ENCODE measurements at regions of chr2 and their contacts with region 1.

Region 1: DNA sequence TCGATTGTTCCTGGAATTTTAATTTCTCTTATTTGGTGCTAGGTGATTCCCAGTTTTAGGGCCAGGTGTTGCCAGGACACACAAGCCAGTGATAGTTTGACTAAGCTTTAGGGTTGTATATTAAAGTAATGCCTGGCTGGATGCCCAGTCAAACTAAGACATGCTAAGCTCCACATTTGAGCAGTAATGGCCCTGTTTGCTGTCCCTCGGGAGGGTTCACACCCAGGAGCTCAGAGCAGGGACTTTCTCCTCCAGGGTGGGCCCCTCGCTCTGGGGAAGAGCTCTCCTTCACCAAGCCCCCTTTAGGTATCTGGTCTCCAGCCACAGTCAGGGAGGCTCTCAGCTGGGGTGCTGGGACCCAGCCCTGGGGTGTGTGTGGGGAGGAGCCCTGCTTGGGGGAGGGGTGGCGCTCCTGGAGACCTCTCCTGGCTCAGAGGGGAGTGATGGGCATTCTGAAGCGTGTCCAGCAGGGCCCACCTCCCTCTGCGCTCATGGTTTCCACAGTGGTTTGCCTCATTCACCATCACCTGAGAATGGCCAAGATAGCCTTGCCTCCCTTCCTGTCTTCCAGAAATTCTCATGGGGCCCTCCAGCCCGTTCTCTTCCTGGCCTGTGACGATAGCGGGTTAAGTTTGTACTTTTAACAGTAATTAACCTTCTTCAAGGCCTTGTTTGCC is 31.7 kb downstream of the INPP4A start:
- DNase-seq: peak; percentile 52
- H3K4me3 ChIP-seq: no peak overlapping the region
- H3K27ac ChIP-seq: peak overlapping the region in 1 of 4 donors; percentile 51
- H3K4me1 ChIP-seq: peaks cover 46 to 84% (median 59%) of the 10 kb centered on the region in 4 donors
- H3K27me3 ChIP-seq: no peaks in the 10 kb centered on the region
- CTCF ChIP-seq: no peak
- EP300 ChIP-seq: no peak
- POLR2A ChIP-seq: no peak

Region 2: DNA sequence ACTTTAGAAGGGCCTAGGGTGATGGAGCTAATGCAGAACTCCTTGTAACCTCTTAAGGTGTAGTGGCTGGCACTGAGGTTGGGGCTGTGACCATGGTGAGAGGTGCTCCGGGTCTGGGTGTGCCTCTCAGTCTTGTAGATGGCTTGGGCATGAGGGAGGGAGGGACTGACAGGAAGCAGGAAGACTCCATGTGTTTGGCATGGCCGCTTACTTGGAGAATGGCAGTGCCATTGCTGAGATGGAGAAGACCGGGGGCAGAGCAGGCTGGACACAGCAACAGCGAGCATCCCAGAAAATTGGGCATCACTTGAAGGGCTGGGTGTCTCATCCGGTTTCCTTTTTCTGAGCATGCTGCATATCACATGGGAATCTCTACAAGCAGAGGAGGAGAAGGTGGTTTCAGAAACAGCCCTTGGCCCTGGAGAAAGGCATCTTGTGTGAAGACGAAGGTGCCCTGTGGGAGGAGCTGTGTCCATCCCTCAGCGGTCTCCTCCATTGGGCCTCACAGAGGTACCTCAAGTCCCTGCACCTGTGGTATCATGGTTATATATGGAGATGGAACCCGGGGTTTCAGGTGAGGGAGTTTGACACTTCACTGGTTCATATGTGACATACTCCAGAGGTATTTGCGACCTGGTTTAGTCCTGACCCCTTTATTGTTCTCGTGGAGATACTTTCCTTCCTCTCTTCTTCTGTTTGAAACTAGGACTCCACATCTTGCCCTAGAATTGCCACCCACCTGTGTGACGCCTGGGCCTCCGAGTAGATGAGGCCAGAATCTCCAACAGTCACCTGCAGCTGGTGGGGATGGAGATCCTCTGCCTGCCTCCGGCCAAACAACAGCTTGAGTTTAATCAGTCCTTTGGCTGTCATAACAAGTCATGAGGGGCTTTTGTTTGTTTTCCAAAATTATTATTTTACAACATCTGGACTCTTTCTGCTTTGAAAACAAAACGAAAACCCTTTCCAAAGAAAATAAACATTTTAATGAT is 13.9 kb after region 1 on chr2:
- in situ Hi-C with region 1: no loop called
- intact Hi-C with region 1: loop called (anchors 2 kb)
- DNase-seq: no peak
- H3K4me3 ChIP-seq: no peak overlapping the region
- H3K27ac ChIP-seq: peak overlapping the region in 1 of 4 donors; percentile 51
- H3K4me1 ChIP-seq: peaks cover 7 to 41% (median 17%) of the 10 kb centered on the region in 4 donors
- H3K27me3 ChIP-seq: no peaks in the 10 kb centered on the region
- CTCF ChIP-seq: no peak
- EP300 ChIP-seq: no peak
- POLR2A ChIP-seq: no peak

Region 3: DNA sequence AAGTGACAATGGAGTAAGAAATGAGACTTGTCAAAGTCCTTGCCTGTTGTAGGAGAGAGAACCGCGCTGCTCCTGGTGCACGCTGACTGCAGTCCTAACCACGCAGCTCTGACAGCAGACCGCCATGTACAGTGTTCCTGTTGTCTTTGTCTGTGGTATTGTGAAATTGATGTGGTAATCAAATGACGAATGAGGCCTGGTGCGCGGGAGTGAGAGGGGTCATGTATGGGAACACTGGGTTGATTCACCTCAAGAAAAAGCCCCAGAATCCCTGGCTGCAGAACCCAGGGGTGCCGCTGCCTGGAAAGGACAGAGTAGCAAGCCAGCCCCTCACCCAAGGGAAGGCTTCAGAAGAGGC is 32.4 kb after region 1 on chr2:
- in situ Hi-C with region 1: no loop called
- intact Hi-C with region 1: no loop called
- DNase-seq: peak; percentile 46
- H3K4me3 ChIP-seq: no peak overlapping the region
- H3K27ac ChIP-seq: peak overlapping the region; percentile 48 to 69 (median 60)
- H3K4me1 ChIP-seq: peaks cover 24 to 56% (median 35%) of the 10 kb centered on the region in 4 donors
- H3K27me3 ChIP-seq: no peaks in the 10 kb centered on the region
- CTCF ChIP-seq: no peak
- EP300 ChIP-seq: no peak
- POLR2A ChIP-seq: peak; percentile 15